A673 (cell line): ENCODE measurements at regions of chr2 and their contacts with region 1.

Region 1: GRCh38 chr2:159989249-159989648 is 73.2 kb downstream of the PLA2R1 start:
- DNase-seq: no peak
- H3K4me3 ChIP-seq: no peak overlapping the region
- H3K27ac ChIP-seq: no peak overlapping the region
- H3K4me1 ChIP-seq: no peaks in the 10 kb centered on the region
- H3K27me3 ChIP-seq: peaks cover 9% of the 10 kb centered on the region
- CTCF ChIP-seq: no peak

Region 2: DNA sequence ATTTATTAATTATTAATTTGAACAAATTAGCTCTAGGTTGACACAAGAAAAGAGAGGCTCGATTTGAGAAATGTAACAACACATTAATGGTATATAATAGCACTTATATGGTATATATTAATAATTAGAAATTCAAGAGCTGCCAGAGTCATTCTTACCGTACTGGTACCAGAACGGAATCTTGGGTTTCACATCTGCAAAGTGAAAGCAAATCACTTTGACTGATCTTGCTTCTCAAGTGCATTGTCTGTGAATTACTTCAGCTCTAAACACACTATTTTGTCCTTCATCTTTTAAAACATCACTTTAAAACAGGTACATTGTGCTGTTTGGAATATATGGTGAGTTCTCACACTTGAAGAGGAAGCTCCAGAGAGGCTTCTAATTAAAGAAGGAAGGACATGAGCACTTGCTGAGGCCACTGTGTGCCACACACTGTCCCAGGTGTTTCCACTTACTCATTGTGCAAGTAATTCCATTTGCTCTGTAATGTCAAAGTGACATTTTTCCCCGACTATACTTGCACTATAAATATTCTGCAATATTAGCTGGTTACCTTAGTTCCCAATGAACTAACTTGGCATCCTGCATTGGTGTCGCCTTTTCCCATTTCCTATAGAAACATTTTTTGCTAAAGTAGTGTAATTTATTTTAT is 12.6 kb before region 1 on chr2:
- CTCF ChIA-PET with region 1: interaction called, 16 read pairs
- POLR2A ChIA-PET with region 1: no interaction called
- intact Hi-C with region 1: no loop called
- DNase-seq: no peak
- H3K4me3 ChIP-seq: no peak overlapping the region
- H3K27ac ChIP-seq: no peak overlapping the region
- H3K4me1 ChIP-seq: no peaks in the 10 kb centered on the region
- H3K27me3 ChIP-seq: peaks cover 19% of the 10 kb centered on the region
- CTCF ChIP-seq: no peak

Region 3: DNA sequence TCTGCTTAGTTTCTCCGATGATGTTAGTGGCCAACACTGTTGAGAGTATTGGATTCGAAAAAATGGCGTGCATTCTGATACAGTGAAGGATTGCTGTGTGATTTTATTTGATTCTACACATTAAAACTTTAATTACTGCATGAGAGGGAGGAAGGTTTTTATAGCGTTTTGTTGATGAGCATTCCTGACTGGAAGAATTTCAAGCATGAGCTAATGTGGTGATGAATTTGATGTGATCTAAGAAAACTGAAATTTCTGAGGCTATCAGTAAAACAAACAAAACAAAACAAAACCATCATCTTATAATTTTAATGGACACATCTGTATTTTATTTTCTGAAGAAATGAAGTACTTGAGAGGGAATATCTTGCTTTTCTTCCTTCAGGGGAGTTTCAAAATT is 151.2 kb after region 1 on chr2:
- CTCF ChIA-PET with region 1: no interaction called
- POLR2A ChIA-PET with region 1: no interaction called
- intact Hi-C with region 1: no loop called
- DNase-seq: no peak
- H3K4me3 ChIP-seq: no peak overlapping the region
- H3K27ac ChIP-seq: no peak overlapping the region
- H3K4me1 ChIP-seq: no peaks in the 10 kb centered on the region
- H3K27me3 ChIP-seq: peaks cover 6% of the 10 kb centered on the region
- CTCF ChIP-seq: no peak